ENCODE measurements at regions of chr1 and their contacts with region 1.

Region 1: GRCh38 chr1:241485554-241485992 is 34.0 kb downstream of the FH start:
- DNase-seq: peak; percentile 5 to 11
- H3K4me3 ChIP-seq: no peak overlapping the region
- H3K4me1 ChIP-seq: no peaks in the 10 kb centered on the region
- H3K27me3 ChIP-seq: no peaks in the 10 kb centered on the region

Region 2: GRCh38 chr1:240732390-240732789 is 753.2 kb before region 1 on chr1:
- in situ Hi-C with region 1: loop called (anchors 25 kb)
- DNase-seq: peak; percentile 12 to 57
- H3K4me3 ChIP-seq: no peak overlapping the region
- H3K4me1 ChIP-seq: no peaks in the 10 kb centered on the region
- H3K27me3 ChIP-seq: no peaks in the 10 kb centered on the region; the same call in 1 of the 2 replicates